ENCODE measurements at regions of chr13 and their contacts with region 1.

Region 1: DNA sequence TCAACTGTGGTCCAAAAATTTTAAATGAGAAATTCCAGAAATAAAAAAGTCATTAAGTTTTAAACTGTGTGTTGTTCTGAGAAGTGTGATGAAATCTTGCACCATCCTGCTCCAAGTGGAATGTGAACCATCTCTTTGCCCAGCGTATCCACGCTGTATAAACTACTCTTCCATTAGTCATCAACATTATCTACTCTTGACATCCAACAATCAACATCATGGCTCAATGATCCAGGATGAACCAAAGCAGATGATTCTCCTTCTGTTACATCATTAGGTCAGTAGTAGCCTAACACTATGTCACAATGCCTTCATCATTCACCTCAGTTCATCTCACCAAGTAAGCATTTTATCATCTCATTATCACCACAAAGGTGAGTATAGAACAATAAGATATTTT is 55.3 kb downstream of the SUCLA2 start:
- DNase-seq: no peak
- H3K4me3 ChIP-seq: no peak overlapping the region
- H3K27ac ChIP-seq: no peak overlapping the region
- H3K4me1 ChIP-seq: no peaks in the 10 kb centered on the region
- H3K27me3 ChIP-seq: no peaks in the 10 kb centered on the region
- CTCF ChIP-seq: no peak

Region 2: GRCh38 chr13:48000778-48001628 is 55.3 kb after region 1 on chr13 and contains the start of gene SUCLA2:
- CTCF ChIA-PET with region 1: no interaction called
- POLR2A ChIA-PET with region 1: interaction called, 16 read pairs
- intact Hi-C with region 1: no loop called
- DNase-seq: peak; percentile 76 to 90
- H3K4me3 ChIP-seq: peak within 1 kb of the TSS; percentile 86
- H3K27ac ChIP-seq: peak within 1 kb of the TSS; percentile 54
- H3K4me1 ChIP-seq: peaks cover 25% of the 10 kb centered on the region
- H3K27me3 ChIP-seq: no peaks in the 10 kb centered on the region
- CTCF ChIP-seq: no peak
- total RNA-seq, gene SUCLA2: 32.0 and 44.8 TPM in 2 replicates